ENCODE measurements at regions of chr10 and their contacts with region 1.

Region 1: GRCh38 chr10:100338434-100339036 is 8.5 kb upstream of the SCD start:
- DNase-seq: peak; percentile 68 to 90 (median 88)
- ATAC-seq: peak; percentile 85
- H3K4me3 ChIP-seq: no peak overlapping the region
- H3K4me1 ChIP-seq: no peaks in the 10 kb centered on the region
- CTCF ChIP-seq: peak; percentile 89

Region 2: DNA sequence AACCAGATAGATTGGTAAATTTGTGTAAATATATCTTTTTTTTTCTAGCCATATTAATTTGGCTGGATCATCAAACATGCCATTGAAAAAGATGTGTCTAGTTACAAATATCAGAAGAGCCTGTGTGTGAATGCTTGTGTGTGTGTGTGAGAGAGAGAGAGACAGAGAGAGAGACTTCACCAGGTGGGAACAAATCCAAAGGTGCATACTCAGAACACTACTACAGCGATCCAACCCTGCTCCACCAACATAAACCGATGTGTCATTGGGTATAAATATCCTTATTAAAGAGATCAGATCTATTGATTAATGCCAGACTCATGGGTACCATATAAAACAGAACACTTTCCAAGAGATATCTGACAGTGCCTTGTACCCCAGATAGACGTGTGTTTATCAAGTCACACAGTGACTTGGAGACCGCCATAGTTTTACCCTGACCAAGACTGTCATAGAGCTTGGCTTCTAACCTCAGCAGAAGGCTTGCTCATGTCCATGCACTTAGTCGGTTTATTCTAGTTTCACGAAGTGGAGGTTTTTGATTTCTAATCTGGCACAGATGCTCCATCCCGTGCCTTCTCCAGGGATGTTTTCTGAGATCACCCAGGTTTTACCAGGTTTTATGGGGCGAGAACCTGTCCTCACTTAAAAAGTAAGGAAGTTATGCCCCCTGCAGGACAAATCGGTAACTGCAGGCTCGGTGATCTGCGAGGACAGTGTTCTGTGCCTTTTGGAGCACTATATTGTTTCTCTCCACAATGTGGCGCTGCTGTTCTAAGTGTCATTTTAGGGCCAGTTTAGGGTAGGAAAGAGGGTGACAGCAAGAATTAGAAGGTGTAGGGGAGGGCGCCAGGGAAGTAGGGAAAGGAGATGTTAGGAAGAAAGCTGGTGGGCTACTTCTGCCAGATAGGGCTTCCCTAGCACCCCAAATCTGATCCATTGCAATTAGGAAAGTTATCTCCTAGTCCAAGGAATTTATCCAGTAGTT is 95.0 kb after region 1 on chr10:
- intact Hi-C with region 1: loop called (anchors 1 to 5 kb)
- DNase-seq: peak; percentile 81 to 100 (median 91)
- ATAC-seq: peak; percentile 100
- H3K4me3 ChIP-seq: no peak overlapping the region
- H3K4me1 ChIP-seq: no peaks in the 10 kb centered on the region
- CTCF ChIP-seq: peak; percentile 88